Esophagus squamous epithelium (tissue), 5 donors: ENCODE measurements at regions of chr14 and their contacts with region 1.

Region 1: GRCh38 chr14:104130974-104131651 is 7.3 kb upstream of the KIF26A start:
- DNase-seq: no peak
- H3K4me3 ChIP-seq: no peak overlapping the region
- H3K27ac ChIP-seq: no peak overlapping the region
- H3K4me1 ChIP-seq: peaks cover 0 to 14% (median 3%) of the 10 kb centered on the region in 3 donors
- H3K27me3 ChIP-seq: peaks cover 4 to 80% (median 9%) of the 10 kb centered on the region in 4 donors
- CTCF ChIP-seq: peak in 5 of 6 experiments; percentile 61 to 92 (median 81)
- POLR2A ChIP-seq: no peak

Region 2: GRCh38 chr14:103973354-103973753 is 157.8 kb before region 1 on chr14:
- intact Hi-C with region 1: no loop called
- DNase-seq: no peak
- H3K4me3 ChIP-seq: no peak overlapping the region
- H3K27ac ChIP-seq: no peak overlapping the region
- H3K4me1 ChIP-seq: no peaks in the 10 kb centered on the region
- H3K27me3 ChIP-seq: no peaks in the 10 kb centered on the region
- CTCF ChIP-seq: no peak
- POLR2A ChIP-seq: no peak

Region 3: DNA sequence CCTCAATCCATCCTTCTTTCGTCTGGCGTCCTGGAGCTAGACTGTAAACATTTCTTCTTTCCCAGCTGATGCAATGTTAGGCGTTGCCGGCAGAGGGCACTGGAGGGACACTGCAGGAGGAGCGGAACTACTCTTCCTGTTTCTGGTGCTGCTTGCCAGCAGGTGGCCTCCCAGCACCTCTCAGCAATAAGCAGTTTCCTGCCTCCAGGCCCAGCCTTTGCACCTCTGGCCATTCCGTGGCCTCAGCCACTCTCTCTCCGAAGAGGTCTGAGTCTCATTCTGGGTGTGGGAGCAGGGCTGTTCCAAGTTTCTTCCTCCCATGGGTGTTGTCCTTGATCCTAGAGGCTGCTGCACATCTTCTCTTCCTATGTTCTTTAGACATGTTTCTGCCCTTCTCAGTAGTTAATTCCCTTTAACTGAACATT is 53.1 kb before region 1 on chr14:
- intact Hi-C with region 1: loop called (anchors 5 kb)
- DNase-seq: no peak
- H3K4me3 ChIP-seq: no peak overlapping the region
- H3K27ac ChIP-seq: no peak overlapping the region
- H3K4me1 ChIP-seq: peaks cover 0 to 8% (median 0%) of the 10 kb centered on the region in 3 donors
- H3K27me3 ChIP-seq: peaks cover 0 to 55% (median 0%) of the 10 kb centered on the region in 4 donors
- CTCF ChIP-seq: peak; percentile 97 to 100 (median 99)
- POLR2A ChIP-seq: no peak

Region 4: DNA sequence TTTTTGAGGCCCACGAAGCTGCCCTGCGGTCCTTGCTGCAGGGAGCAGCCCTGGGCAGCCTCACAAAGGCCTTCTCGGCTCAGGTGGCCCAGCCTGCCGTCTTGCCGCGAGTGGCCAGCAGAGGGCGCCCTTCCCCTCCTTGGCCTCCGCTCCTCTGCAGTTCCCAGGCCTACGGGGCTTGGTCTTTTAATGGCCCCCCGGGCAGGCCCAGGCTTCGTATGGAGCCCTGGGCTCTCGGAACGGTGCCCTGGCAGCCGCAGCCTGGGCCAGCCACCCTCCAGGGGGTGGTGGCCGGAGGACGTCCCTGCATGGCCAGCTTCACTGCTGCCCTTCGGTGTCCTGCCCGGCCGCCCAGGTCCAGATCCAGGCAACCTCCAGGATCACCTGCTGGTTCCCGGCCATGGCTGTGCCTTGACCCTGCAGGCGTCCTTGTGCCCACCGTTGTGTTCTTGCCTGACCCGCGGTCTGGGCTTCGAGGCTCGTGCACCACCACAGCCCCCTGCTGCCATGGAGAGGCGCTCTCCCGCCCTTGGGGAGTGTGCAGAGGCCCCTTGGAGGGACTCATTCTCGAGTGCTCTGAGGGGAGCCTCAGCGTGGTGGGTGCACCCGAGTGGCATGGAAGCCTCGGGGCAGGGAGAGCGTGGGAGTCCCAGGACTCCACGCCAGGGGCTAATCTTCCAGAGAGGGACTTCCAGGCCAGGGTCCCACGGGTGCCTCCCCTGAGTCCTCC is 36.2 kb before region 1 on chr14:
- intact Hi-C with region 1: loop called (anchors 5 kb)
- DNase-seq: no peak
- H3K4me3 ChIP-seq: no peak overlapping the region
- H3K27ac ChIP-seq: no peak overlapping the region
- H3K4me1 ChIP-seq: peaks cover 14 to 37% (median 17%) of the 10 kb centered on the region in 3 donors
- H3K27me3 ChIP-seq: peaks cover 0 to 53% (median 0%) of the 10 kb centered on the region in 4 donors
- CTCF ChIP-seq: peak; percentile 81 to 96 (median 90)
- POLR2A ChIP-seq: no peak